ENCODE measurements at regions of chr7 and their contacts with region 1.

Region 1: GRCh38 chr7:106176414-106177299 is 64.5 kb upstream of the SYPL1 start:
- DNase-seq: peak; percentile 81 to 92 (median 84)
- ATAC-seq: peak; percentile 80 to 92 (median 90)
- H3K4me3 ChIP-seq: no peak overlapping the region
- H3K27ac ChIP-seq: peak overlapping the region in 6 of 12 donors; percentile 8 to 72 (median 37)
- H3K4me1 ChIP-seq: peaks cover 4 to 35% (median 17%) of the 10 kb centered on the region in 12 donors
- H3K27me3 ChIP-seq: peaks cover 0 to 4% (median 0%) of the 10 kb centered on the region in 9 donors
- CTCF ChIP-seq: peak; percentile 90 to 99 (median 96)
- POLR2A ChIP-seq: no peak

Region 2: DNA sequence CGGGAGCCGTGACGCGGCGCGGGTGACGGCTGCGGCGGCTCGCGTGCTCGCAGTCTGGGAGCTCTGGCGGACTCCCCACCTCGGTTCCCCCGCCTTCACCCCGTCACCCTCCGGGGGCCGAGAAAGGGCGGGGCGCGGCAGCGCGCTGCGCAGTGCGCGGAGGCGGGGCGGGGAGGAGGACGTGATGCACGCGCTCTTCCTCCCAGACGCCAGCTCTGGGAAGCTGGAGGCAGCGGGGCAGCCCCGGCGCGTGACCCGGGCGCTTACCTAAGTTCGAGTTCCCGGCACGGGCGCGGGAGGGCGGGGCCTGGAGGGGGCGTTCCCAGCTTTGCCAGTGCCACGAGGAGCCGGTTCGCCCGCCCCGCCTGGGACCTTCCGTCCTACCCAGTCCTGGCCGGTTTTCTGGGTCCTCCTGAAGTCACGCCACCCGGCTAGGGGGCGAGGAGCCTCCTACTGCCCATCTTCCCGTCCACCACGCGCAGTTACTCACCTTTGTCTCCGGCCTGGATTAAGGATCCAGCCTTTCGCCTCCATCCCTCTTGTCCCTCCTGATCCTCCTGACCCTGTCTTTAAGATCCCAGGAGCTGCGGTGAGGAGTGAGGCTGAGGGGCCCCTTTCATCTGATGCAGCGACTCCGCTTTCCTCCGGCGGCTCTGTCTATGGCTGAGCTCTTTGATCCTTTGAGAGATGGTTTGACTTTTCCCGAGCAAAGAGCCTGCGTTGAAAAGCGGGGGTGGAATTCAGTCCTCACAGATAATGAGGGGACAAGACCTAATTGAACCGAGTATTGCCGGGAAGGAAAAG is 108.6 kb after region 1 on chr7:
- intact Hi-C with region 1: loop called in 8 of 10 experiments (anchors 2 to 5 kb)
- DNase-seq: peak; percentile 96 to 99 (median 97)
- ATAC-seq: peak; percentile 95 to 98 (median 96)
- H3K4me3 ChIP-seq: peak overlapping the region; percentile 46 to 96 (median 78)
- H3K27ac ChIP-seq: peak overlapping the region; percentile 66 to 99 (median 95)
- H3K4me1 ChIP-seq: peaks cover 0 to 41% (median 20%) of the 10 kb centered on the region in 12 donors
- H3K27me3 ChIP-seq: no peaks in the 10 kb centered on the region
- CTCF ChIP-seq: peak in 1 of 12 donors; percentile 5
- POLR2A ChIP-seq: peak in 1 of 2 donors; percentile 75

Region 3: GRCh38 chr7:106461993-106462859 is 285.6 kb after region 1 on chr7:
- intact Hi-C with region 1: loop called (anchors 1 to 2 kb)
- DNase-seq: no peak
- ATAC-seq: peak in 2 of 4 donors; percentile 52 to 63
- H3K4me3 ChIP-seq: no peak overlapping the region
- H3K27ac ChIP-seq: no peak overlapping the region
- H3K4me1 ChIP-seq: peaks cover 0 to 17% (median 3%) of the 10 kb centered on the region in 12 donors
- H3K27me3 ChIP-seq: no peaks in the 10 kb centered on the region
- CTCF ChIP-seq: peak; percentile 44 to 72 (median 64)
- POLR2A ChIP-seq: no peak

Region 4: GRCh38 chr7:106736508-106737201 is 560.0 kb after region 1 on chr7:
- intact Hi-C with region 1: loop called in 7 of 10 experiments (anchors 2 to 5 kb)
- DNase-seq: peak in 2 of 5 donors; percentile 20 to 21
- ATAC-seq: peak; percentile 37 to 81 (median 74)
- H3K4me3 ChIP-seq: peak overlapping the region in 1 of 12 donors; percentile 2
- H3K27ac ChIP-seq: no peak overlapping the region
- H3K4me1 ChIP-seq: peaks cover 0 to 23% (median 2%) of the 10 kb centered on the region in 12 donors
- H3K27me3 ChIP-seq: no peaks in the 10 kb centered on the region
- CTCF ChIP-seq: peak; percentile 40 to 73 (median 60)
- POLR2A ChIP-seq: no peak